Caco-2 (cell line): ENCODE measurements at regions of chr11 and their contacts with region 1.

Region 1: DNA sequence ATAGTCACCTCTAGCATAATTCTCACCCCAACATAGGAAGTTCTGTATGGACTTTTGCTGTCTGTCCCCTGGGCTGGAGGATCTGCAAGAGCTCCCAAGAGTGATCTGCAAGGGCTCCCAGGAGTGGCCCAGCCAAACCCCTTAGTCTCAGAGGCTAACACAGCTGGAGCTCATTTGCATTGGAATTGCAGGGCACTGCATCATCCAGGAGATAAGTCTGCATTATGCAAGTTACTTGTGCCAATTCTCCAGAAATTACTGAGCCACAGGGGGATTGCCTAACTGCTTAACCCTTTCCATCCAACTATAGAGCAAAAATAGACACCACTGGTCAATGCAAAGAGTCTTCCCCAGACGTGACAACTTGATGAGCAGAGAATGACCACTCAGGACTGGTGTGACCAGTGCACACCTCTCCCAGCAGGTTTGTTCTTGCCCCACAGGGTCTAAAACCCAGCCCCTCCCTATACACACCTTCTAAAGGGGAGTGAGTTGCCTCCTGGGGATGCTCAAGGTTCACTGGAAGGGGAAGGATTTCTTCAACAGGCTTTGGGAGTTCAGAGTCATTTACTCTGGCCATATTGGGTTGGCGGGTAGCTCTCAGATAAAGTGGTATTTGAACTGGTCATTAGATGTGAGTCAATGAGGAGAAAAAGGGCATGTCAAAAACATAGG is 38.4 kb downstream of the POU2AF3 start:
- DNase-seq: peak; percentile 87 to 88
- H3K4me3 ChIP-seq: no peak overlapping the region
- H3K4me3 Mint-ChIP-seq: peak overlapping the region; percentile 16
- H3K27ac Mint-ChIP-seq: peak overlapping the region; percentile 86
- H3K4me1 ChIP-seq: peaks cover 58% of the 10 kb centered on the region
- H3K4me1 Mint-ChIP-seq: peaks cover 57% of the 10 kb centered on the region
- H3K27me3 ChIP-seq: no peaks in the 10 kb centered on the region
- H3K27me3 Mint-ChIP-seq: no peaks in the 10 kb centered on the region
- CTCF ChIP-seq: no peak

Region 2: DNA sequence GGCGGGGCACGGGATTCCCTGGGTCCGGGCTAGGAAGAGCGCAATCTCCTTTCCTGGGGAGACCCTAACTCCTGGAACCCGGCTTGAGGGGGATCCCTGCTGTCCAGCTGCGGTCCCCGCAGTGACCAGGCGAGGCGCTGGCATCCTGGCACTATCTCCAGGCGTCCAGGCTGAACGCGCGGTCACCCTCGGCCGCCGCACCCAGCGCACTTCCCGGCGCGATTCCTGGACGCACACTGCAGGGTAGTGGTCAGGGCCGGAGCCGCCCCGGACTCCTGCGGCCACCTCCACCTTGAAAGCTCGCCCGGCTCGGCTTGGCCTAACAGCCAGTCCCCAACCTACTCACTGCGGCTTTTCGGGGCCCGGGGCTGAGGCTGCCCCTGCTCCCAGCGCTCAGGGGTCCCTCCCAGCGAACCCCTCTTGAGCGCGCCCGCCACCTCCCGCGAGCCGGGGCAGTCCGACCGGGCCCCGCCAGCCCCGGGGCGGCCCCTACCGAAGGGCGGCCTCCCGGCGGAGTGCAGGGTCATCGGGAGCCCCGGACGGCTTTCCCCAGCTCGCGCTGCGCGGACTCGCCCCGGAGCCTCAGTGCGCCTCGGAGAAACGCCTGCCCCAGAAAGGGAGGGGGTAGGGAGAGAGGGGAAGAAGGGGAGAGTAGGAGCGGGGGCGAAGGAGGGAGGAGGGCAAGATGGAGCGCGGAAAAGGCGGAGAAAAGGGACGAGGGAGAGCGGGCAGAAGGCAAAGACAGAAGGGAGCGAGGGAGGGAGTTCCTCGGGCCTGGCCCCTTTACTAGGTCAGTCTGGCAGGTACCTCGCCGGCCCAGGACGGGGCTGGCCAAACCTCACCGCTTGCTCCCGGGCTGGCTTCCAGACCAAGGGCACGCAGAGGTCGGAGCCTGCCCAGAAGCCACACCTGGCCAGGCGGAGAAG is 37.4 kb before region 1 on chr11:
- CTCF ChIA-PET with region 1: interaction called, 7 read pairs
- POLR2A ChIA-PET with region 1: interaction called, 3 read pairs
- intact Hi-C with region 1: loop called (anchors 1 kb)
- DNase-seq: peak; percentile 79 to 87
- H3K4me3 ChIP-seq: peak overlapping the region; percentile 76
- H3K4me3 Mint-ChIP-seq: peak overlapping the region; percentile 82
- H3K27ac Mint-ChIP-seq: peak overlapping the region; percentile 72
- H3K4me1 ChIP-seq: peaks cover 37% of the 10 kb centered on the region
- H3K4me1 Mint-ChIP-seq: peaks cover 34% of the 10 kb centered on the region
- H3K27me3 ChIP-seq: no peaks in the 10 kb centered on the region
- H3K27me3 Mint-ChIP-seq: no peaks in the 10 kb centered on the region
- CTCF ChIP-seq: peak; percentile 65 to 89

Region 3: GRCh38 chr11:111309215-111309915 is 27.4 kb before region 1 on chr11:
- CTCF ChIA-PET with region 1: interaction called, 9 read pairs
- POLR2A ChIA-PET with region 1: interaction called, 3 read pairs
- intact Hi-C with region 1: loop called (anchors 1 kb)
- DNase-seq: peak in 1 of 2 experiments; percentile 31
- H3K4me3 ChIP-seq: no peak overlapping the region
- H3K4me3 Mint-ChIP-seq: no peak overlapping the region
- H3K27ac Mint-ChIP-seq: no peak overlapping the region
- H3K4me1 ChIP-seq: peaks cover 40% of the 10 kb centered on the region
- H3K4me1 Mint-ChIP-seq: peaks cover 31% of the 10 kb centered on the region
- H3K27me3 ChIP-seq: no peaks in the 10 kb centered on the region
- H3K27me3 Mint-ChIP-seq: no peaks in the 10 kb centered on the region
- CTCF ChIP-seq: no peak

Region 4: DNA sequence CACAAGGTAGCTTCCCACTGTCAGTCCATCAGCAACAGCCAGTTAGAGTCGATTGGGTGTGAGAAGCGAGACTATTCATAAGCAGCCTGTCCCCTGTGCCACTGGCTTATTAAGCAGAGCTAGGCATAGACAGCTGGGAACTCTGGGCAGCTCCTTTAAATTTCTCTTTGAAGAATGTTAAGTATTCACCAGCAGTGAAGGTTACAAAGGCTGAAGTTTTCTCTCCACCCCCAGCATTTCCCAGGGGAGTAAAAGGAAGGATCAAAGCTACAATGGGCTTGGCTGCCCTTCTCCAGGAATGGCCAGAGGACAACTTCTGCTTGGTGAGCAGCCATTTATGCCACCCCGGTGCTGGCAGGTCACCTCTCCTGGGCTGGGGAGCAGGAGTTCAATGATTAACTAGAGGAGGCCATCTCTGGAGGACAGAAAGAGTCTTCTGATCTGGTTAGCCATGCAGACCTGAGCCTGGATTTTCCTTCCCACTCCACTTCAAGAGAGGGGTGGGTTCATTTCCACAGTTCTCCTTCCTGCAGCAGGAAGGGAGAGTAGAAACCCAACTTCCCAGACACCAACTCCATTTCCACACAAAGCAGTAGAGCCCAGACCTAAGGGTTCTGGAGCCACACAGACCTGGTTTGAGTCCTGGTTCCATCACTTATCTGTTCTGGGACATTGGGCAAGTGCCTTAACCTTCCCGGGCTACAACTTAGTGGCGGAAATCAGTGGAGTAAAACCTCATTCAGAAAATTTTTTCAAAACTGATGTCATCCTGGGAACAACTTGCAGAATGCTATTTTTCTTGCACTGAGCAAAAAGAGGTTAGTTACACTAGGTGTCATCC is 15.8 kb before region 1 on chr11:
- CTCF ChIA-PET with region 1: interaction called, 8 read pairs
- POLR2A ChIA-PET with region 1: interaction called, 3 read pairs
- intact Hi-C with region 1: loop called (anchors 1 kb)
- DNase-seq: peak; percentile 65 to 80
- H3K4me3 ChIP-seq: no peak overlapping the region
- H3K4me3 Mint-ChIP-seq: peak overlapping the region; percentile 17
- H3K27ac Mint-ChIP-seq: peak overlapping the region; percentile 82
- H3K4me1 ChIP-seq: peaks cover 29% of the 10 kb centered on the region
- H3K4me1 Mint-ChIP-seq: peaks cover 40% of the 10 kb centered on the region
- H3K27me3 ChIP-seq: no peaks in the 10 kb centered on the region
- H3K27me3 Mint-ChIP-seq: no peaks in the 10 kb centered on the region
- CTCF ChIP-seq: no peak

Region 5: GRCh38 chr11:111359223-111360149 is 22.8 kb after region 1 on chr11:
- CTCF ChIA-PET with region 1: interaction called, 16 read pairs
- POLR2A ChIA-PET with region 1: interaction called, 12 read pairs
- intact Hi-C with region 1: loop called (anchors 1 kb)
- DNase-seq: no peak
- H3K4me3 ChIP-seq: no peak overlapping the region
- H3K4me3 Mint-ChIP-seq: peak overlapping the region; percentile 13
- H3K27ac Mint-ChIP-seq: no peak overlapping the region
- H3K4me1 ChIP-seq: peaks cover 73% of the 10 kb centered on the region
- H3K4me1 Mint-ChIP-seq: peaks cover 41% of the 10 kb centered on the region
- H3K27me3 ChIP-seq: no peaks in the 10 kb centered on the region
- H3K27me3 Mint-ChIP-seq: no peaks in the 10 kb centered on the region
- CTCF ChIP-seq: peak in 1 of 2 experiments; percentile 11